A673 (cell line): ENCODE measurements at regions of chr20 and their contacts with region 1.

Region 1: GRCh38 chr20:41738604-41739206 is 120.5 kb upstream of the CHD6 start:
- DNase-seq: peak; percentile 65
- H3K4me3 ChIP-seq: no peak overlapping the region
- H3K27ac ChIP-seq: no peak overlapping the region
- H3K4me1 ChIP-seq: peaks cover under 1% of the 10 kb centered on the region
- H3K27me3 ChIP-seq: no peaks in the 10 kb centered on the region
- CTCF ChIP-seq: peak; percentile 93

Region 2: DNA sequence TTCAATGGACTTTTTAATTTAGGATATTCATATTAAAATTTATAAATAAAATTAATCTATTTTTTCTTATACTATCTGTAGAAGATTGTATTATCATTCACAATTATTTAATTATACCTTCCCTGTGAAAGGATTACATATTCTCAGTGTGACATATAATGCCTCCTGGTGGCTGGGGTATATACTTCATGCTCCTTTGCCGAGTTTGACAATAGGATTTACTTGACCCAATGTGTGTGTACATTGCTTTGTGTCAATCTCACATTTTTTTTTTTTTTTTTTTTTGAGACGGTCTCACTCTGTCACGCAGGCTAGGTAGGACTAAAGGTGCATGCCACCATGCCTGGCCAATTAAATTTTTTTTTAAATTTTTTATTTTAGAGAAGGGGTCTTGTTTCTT is 109.5 kb after region 1 on chr20:
- CTCF ChIA-PET with region 1: interaction called, 3 read pairs
- POLR2A ChIA-PET with region 1: no interaction called
- intact Hi-C with region 1: loop called (anchors 2 kb)
- DNase-seq: peak; percentile 20
- H3K4me3 ChIP-seq: no peak overlapping the region
- H3K27ac ChIP-seq: no peak overlapping the region
- H3K4me1 ChIP-seq: no peaks in the 10 kb centered on the region
- H3K27me3 ChIP-seq: peaks cover 23% of the 10 kb centered on the region
- CTCF ChIP-seq: peak; percentile 44; the same call in 1 of the 2 replicates

Region 3: GRCh38 chr20:42041072-42041471 is 302.4 kb after region 1 on chr20:
- CTCF ChIA-PET with region 1: no interaction called
- POLR2A ChIA-PET with region 1: no interaction called
- intact Hi-C with region 1: loop called (anchors 5 kb)
- DNase-seq: no peak
- H3K4me3 ChIP-seq: no peak overlapping the region
- H3K27ac ChIP-seq: no peak overlapping the region
- H3K4me1 ChIP-seq: no peaks in the 10 kb centered on the region
- H3K27me3 ChIP-seq: peaks cover 9% of the 10 kb centered on the region
- CTCF ChIP-seq: peak; percentile 33

Region 4: DNA sequence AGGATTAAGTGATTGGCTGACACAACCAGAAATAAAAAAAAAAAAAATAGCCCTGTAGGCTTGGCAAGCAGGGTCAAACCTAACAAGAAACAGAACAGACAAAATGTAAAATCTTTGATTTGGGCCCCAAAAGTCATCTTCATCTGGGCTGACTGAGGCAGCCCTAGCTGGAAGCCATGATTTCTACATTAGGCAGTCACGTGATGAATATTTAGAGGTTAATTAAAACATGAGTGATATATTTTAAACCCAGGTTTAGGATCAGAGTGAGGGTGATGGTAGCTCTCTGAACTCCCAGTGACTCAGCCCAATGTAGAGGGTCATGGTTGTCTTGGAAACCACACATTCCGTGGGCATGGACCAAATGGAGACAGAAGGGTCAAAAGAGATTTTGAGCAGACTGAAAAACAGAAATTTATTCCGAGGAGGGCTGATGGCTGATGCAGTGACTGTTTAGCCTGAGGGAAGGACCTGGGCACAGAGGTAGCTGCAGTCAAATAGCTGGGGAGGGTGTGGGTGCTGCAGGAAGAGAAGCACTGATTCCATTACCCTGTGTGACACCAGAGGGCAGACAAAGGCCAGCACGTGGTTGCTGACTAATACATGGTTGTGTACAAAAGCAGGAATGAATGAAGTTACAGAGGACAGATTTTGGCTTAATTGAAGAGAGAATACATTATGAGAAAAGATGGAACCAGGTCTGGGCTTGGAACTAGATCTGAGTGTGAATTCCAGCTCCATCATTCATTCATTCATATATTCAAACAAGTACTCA is 452.6 kb after region 1 on chr20:
- CTCF ChIA-PET with region 1: no interaction called
- POLR2A ChIA-PET with region 1: no interaction called
- intact Hi-C with region 1: no loop called
- DNase-seq: no peak
- H3K4me3 ChIP-seq: no peak overlapping the region
- H3K27ac ChIP-seq: no peak overlapping the region
- H3K4me1 ChIP-seq: no peaks in the 10 kb centered on the region
- H3K27me3 ChIP-seq: no peaks in the 10 kb centered on the region
- CTCF ChIP-seq: no peak

Region 5: GRCh38 chr20:42530822-42531448 is 792.2 kb after region 1 on chr20:
- CTCF ChIA-PET with region 1: no interaction called
- POLR2A ChIA-PET with region 1: no interaction called
- intact Hi-C with region 1: loop called (anchors 10 kb)
- DNase-seq: peak; percentile 46
- H3K4me3 ChIP-seq: no peak overlapping the region
- H3K27ac ChIP-seq: no peak overlapping the region
- H3K4me1 ChIP-seq: no peaks in the 10 kb centered on the region
- H3K27me3 ChIP-seq: peaks cover 11% of the 10 kb centered on the region
- CTCF ChIP-seq: peak; percentile 71

Region 6: GRCh38 chr20:43187476-43188233 is 1449.0 kb after region 1 on chr20:
- CTCF ChIA-PET with region 1: interaction called, 6 read pairs
- POLR2A ChIA-PET with region 1: no interaction called
- intact Hi-C with region 1: loop called (anchors 2 kb)
- DNase-seq: peak; percentile 72
- H3K4me3 ChIP-seq: no peak overlapping the region
- H3K27ac ChIP-seq: no peak overlapping the region
- H3K4me1 ChIP-seq: no peaks in the 10 kb centered on the region
- H3K27me3 ChIP-seq: peaks cover 85% of the 10 kb centered on the region
- CTCF ChIP-seq: peak; percentile 97

Region 7: GRCh38 chr20:43408848-43409576 is 1670.3 kb after region 1 on chr20:
- CTCF ChIA-PET with region 1: interaction called, 6 read pairs
- POLR2A ChIA-PET with region 1: no interaction called
- intact Hi-C with region 1: loop called (anchors 1 kb)
- DNase-seq: peak; percentile 67
- H3K4me3 ChIP-seq: no peak overlapping the region
- H3K27ac ChIP-seq: no peak overlapping the region
- H3K4me1 ChIP-seq: no peaks in the 10 kb centered on the region
- H3K27me3 ChIP-seq: peaks cover 19% of the 10 kb centered on the region
- CTCF ChIP-seq: peak; percentile 83